Naive thymus-derived CD4-positive, alpha-beta T cell (primary cell): ENCODE measurements at regions of chr15 and their contacts with region 1.

Region 1: DNA sequence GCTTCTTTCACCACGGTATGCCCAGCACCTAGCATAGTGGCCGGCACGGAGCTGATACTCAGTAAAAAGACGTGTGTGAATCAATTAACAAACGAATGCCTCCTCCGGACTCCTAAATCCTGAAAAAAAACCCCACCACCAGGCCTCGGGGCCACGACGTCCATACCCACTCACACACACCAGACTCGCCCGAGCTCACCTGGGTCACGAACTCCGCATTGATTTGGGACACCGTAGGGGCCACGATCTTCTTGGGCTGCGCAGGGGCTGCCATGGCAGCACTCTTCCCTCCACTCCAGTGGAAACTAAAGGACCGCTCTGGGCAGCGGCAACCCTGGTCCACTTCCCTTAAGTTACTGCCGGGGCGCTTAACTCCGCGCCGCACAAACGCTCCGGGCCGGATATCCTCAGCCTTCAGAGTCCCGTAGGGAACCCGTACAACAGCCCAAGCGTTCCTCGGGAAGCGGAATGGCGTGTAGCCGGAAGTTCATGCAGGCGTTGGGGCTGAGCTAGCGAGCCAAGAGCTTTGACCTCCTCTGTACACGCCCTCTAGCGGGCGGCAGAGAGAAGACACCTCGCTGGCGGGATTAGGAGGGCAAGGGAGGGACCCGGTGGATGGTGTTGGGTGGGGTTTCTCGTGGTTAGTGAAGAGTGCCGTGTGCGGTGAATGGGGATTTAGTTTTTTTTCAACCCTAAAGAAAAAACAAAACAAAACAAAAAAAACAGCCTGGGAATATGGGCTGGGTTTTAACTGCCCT is at the start of gene AQR:
- DNase-seq: peak; percentile 74 to 91 (median 85)
- ATAC-seq: peak; percentile 98
- H3K4me3 ChIP-seq: peak within 1 kb of the TSS; percentile 99
- H3K4me3 Mint-ChIP-seq: peak within 1 kb of the TSS; percentile 92 to 99 (median 98)
- H3K27ac ChIP-seq: peak within 1 kb of the TSS; percentile 83
- H3K27ac Mint-ChIP-seq: peak within 1 kb of the TSS; percentile 88 to 100 (median 95)
- H3K4me1 ChIP-seq: peaks cover 10 to 15% of the 10 kb centered on the region in 2 donors
- H3K4me1 Mint-ChIP-seq: peaks cover 30 to 56% (median 51%) of the 10 kb centered on the region in 7 donors
- H3K27me3 ChIP-seq: no peaks in the 10 kb centered on the region
- H3K27me3 Mint-ChIP-seq: no peaks in the 10 kb centered on the region
- total RNA-seq, gene AQR: 38.1 to 43.5 (median 41.3) TPM

Region 2: GRCh38 chr15:34038023-34038870 is 931.3 kb before region 1 on chr15:
- CTCF ChIA-PET with region 1: no interaction called
- POLR2A ChIA-PET with region 1: no interaction called
- intact Hi-C with region 1: loop called in 1 of 2 experiments (anchors 2 kb)
- DNase-seq: peak; percentile 52 to 76 (median 72)
- ATAC-seq: peak; percentile 90
- H3K4me3 ChIP-seq: peak overlapping the region; percentile 100
- H3K4me3 Mint-ChIP-seq: peak overlapping the region; percentile 80 to 97 (median 94)
- H3K27ac ChIP-seq: peak overlapping the region; percentile 80
- H3K27ac Mint-ChIP-seq: peak overlapping the region; percentile 87 to 96 (median 94)
- H3K4me1 ChIP-seq: peaks cover 8 to 14% of the 10 kb centered on the region in 2 donors
- H3K4me1 Mint-ChIP-seq: peaks cover 12 to 25% (median 23%) of the 10 kb centered on the region in 7 donors
- H3K27me3 ChIP-seq: no peaks in the 10 kb centered on the region
- H3K27me3 Mint-ChIP-seq: no peaks in the 10 kb centered on the region

Region 3: DNA sequence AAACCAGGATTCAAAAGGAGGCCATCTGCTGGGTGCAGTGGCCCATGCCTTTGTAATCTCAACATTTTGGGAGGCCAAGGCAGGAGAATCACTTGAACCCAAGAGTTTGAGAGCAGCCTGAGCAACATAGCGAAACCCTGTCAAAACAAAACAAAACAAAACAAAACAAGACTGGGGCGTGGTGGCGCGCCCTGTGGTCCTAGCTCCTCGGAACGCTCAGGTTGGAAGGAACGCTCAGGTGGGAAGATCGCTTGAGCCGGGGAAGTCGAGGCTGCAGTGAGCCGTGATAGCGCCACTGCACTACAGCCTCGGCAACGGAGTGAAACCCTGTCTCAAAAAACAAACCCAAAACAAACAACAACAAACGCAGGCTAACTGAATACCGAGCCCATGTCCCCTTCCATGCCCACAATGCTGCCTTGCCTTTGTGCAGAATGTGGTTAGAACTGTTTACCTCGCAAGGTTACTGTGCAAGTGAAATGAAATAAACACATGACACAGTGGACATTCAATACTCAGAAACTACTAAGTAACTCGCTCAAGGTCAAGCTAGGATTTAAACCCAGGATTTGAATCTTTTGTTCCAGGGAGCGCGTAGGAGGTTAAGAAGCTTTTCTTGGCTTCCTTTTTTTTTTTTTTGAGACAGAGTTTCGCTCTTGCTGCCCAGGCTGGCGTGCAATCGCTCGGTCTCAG is 745.5 kb before region 1 on chr15:
- CTCF ChIA-PET with region 1: no interaction called
- POLR2A ChIA-PET with region 1: interaction called, 3 read pairs
- intact Hi-C with region 1: loop called (anchors 5 to 10 kb)
- DNase-seq: no peak
- ATAC-seq: no peak
- H3K4me3 ChIP-seq: peak overlapping the region; percentile 82
- H3K4me3 Mint-ChIP-seq: peak overlapping the region; percentile 88 to 100 (median 94)
- H3K27ac ChIP-seq: peak overlapping the region; percentile 83
- H3K27ac Mint-ChIP-seq: peak overlapping the region; percentile 93 to 100 (median 99)
- H3K4me1 ChIP-seq: peaks cover 5 to 13% of the 10 kb centered on the region in 2 donors
- H3K4me1 Mint-ChIP-seq: peaks cover 9 to 35% (median 30%) of the 10 kb centered on the region in 7 donors
- H3K27me3 ChIP-seq: no peaks in the 10 kb centered on the region
- H3K27me3 Mint-ChIP-seq: peaks cover 0 to 5% (median 0%) of the 10 kb centered on the region in 5 donors

Region 4: GRCh38 chr15:34701536-34701935 is 268.0 kb before region 1 on chr15:
- CTCF ChIA-PET with region 1: no interaction called
- POLR2A ChIA-PET with region 1: no interaction called
- intact Hi-C with region 1: no loop called
- DNase-seq: no peak
- ATAC-seq: no peak
- H3K4me3 ChIP-seq: no peak overlapping the region
- H3K4me3 Mint-ChIP-seq: no peak overlapping the region
- H3K27ac ChIP-seq: no peak overlapping the region
- H3K27ac Mint-ChIP-seq: no peak overlapping the region
- H3K4me1 ChIP-seq: no peaks in the 10 kb centered on the region
- H3K4me1 Mint-ChIP-seq: peaks cover 0 to 2% (median 0%) of the 10 kb centered on the region in 7 donors
- H3K27me3 ChIP-seq: no peaks in the 10 kb centered on the region
- H3K27me3 Mint-ChIP-seq: peaks cover 26 to 40% (median 28%) of the 10 kb centered on the region in 5 donors

Region 5: DNA sequence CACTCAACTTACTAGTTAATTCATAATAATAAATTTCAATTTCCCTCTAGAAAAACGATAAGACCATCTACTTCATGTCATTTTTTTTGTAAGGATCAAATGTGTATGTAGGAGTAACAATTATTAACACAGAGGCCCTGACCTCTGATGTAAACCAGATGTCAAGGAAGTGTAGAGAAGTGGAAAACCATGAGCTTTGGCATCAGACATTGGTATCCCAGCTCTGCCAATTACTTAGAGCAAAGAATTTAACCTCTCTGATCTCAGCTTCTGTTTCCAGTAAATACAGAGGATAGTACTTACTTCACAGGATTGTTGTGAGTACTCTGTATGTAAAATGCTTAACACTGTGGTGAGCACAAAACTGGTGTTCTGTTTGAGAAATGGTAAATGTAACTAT is 17.5 kb before region 1 on chr15:
- CTCF ChIA-PET with region 1: interaction called, 3 read pairs
- POLR2A ChIA-PET with region 1: interaction called, 5 read pairs
- intact Hi-C with region 1: loop called in 1 of 2 experiments (anchors 2 kb)
- DNase-seq: no peak
- ATAC-seq: no peak
- H3K4me3 ChIP-seq: no peak overlapping the region
- H3K4me3 Mint-ChIP-seq: no peak overlapping the region
- H3K27ac ChIP-seq: no peak overlapping the region
- H3K27ac Mint-ChIP-seq: no peak overlapping the region
- H3K4me1 ChIP-seq: no peaks in the 10 kb centered on the region
- H3K4me1 Mint-ChIP-seq: peaks cover 0 to 13% (median 6%) of the 10 kb centered on the region in 7 donors
- H3K27me3 ChIP-seq: no peaks in the 10 kb centered on the region
- H3K27me3 Mint-ChIP-seq: no peaks in the 10 kb centered on the region

Region 6: GRCh38 chr15:35545824-35546510 is 576.4 kb after region 1 on chr15 and contains the start of gene DPH6:
- CTCF ChIA-PET with region 1: no interaction called
- POLR2A ChIA-PET with region 1: no interaction called
- intact Hi-C with region 1: loop called in 1 of 2 experiments (anchors 5 kb)
- DNase-seq: peak; percentile 76 to 92 (median 87)
- ATAC-seq: peak; percentile 90
- H3K4me3 ChIP-seq: peak within 1 kb of the TSS; percentile 80
- H3K4me3 Mint-ChIP-seq: peak within 1 kb of the TSS; percentile 90 to 100 (median 98)
- H3K27ac ChIP-seq: peak within 1 kb of the TSS; percentile 93
- H3K27ac Mint-ChIP-seq: peak within 1 kb of the TSS; percentile 93 to 99 (median 98)
- H3K4me1 ChIP-seq: peaks cover 13 to 18% of the 10 kb centered on the region in 2 donors
- H3K4me1 Mint-ChIP-seq: peaks cover 5 to 33% (median 26%) of the 10 kb centered on the region in 7 donors
- H3K27me3 ChIP-seq: no peaks in the 10 kb centered on the region
- H3K27me3 Mint-ChIP-seq: no peaks in the 10 kb centered on the region
- total RNA-seq, gene DPH6: 10.5 to 16.6 (median 12.5) TPM